Cardiac septum (tissue), 1 donor: ENCODE measurements at regions of chr2 and their contacts with region 1.

Region 1: DNA sequence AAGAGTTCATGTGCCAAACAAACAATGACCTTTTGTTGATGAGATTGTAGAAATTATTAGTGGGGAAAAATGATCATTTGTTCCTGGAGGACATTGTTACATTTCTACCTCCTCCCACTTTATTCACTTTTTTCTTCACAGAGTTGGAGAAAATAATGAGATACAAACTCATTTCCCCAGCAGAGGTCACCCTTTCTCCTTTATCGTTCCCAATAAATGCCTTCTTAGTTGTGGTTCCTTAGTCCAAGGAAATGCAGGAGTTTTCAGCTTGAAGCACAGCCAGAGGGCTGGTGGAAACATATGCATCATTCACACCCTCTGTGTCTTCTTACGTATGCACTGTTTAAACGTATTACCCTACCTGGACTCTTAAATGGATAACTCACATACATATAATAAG is 108.8 kb downstream of the SLC4A3 start:
- DNase-seq: no peak

Region 2: GRCh38 chr2:219789476-219789875 is 53.3 kb after region 1 on chr2:
- intact Hi-C with region 1: no loop called
- DNase-seq: no peak

Region 3: DNA sequence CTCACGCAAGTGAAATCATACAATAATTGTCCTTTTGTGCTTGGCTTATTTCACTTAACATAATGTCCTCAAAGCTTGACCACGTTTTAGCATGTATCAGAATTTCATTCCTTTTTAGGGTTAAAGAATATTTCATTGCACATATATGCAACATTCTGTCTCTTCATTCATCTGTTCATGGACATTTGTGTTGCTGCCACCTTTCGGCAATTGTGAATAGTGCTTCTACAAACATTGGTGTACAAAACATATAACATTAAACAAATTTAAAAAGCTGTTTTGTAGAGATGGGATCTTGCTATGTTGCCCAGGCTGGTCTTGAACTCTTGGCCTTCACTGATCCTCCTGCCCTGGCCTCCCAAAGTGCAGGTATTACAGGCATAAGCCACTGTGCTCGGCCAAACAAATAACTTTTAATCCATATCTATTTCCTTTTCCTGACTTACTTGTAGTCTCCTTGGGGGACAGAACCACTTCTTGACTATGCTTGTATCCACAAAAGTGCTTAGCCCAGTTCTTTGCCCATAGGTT is 100.5 kb after region 1 on chr2:
- intact Hi-C with region 1: loop called (anchors 2 kb)
- DNase-seq: no peak